Naive thymus-derived CD8-positive, alpha-beta T cell (primary cell): ENCODE measurements at regions of chr17 and their contacts with region 1.

Region 1: DNA sequence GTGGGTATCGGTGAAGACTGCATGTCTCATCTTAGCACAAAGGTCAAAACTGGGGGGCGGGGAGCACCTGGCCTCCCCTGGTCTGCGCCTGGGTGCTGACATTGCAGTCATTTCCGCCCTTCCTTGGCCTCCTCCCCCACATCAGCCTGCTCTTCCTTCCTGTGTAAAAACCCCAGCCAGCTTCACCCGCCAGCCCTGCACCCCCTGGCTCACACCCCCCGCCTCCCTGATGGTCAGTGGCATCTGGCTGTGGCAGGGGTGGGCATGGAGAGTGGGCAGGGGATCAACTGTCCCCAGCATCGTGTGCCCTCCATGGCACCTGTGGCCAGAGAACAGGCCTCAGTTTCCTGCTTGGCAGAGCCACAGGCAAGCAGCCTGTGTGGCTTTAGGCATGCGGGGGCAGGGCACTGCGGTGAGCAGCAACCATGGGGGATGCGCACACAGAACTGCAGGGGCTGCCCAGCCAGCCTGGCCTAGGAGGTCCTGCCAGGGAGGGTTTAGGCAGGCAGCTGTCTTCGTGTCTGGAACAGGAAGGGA is 26.5 kb upstream of the LASP1NB start:
- DNase-seq: peak; percentile 54 to 90 (median 76)
- ATAC-seq: peak; percentile 81 to 90
- H3K4me3 Mint-ChIP-seq: peak overlapping the region; percentile 74 to 93 (median 84)
- H3K27ac Mint-ChIP-seq: peak overlapping the region; percentile 92 to 100 (median 97)
- H3K4me1 Mint-ChIP-seq: peaks cover 22 to 84% (median 70%) of the 10 kb centered on the region in 4 donors
- H3K27me3 Mint-ChIP-seq: no peaks in the 10 kb centered on the region

Region 2: DNA sequence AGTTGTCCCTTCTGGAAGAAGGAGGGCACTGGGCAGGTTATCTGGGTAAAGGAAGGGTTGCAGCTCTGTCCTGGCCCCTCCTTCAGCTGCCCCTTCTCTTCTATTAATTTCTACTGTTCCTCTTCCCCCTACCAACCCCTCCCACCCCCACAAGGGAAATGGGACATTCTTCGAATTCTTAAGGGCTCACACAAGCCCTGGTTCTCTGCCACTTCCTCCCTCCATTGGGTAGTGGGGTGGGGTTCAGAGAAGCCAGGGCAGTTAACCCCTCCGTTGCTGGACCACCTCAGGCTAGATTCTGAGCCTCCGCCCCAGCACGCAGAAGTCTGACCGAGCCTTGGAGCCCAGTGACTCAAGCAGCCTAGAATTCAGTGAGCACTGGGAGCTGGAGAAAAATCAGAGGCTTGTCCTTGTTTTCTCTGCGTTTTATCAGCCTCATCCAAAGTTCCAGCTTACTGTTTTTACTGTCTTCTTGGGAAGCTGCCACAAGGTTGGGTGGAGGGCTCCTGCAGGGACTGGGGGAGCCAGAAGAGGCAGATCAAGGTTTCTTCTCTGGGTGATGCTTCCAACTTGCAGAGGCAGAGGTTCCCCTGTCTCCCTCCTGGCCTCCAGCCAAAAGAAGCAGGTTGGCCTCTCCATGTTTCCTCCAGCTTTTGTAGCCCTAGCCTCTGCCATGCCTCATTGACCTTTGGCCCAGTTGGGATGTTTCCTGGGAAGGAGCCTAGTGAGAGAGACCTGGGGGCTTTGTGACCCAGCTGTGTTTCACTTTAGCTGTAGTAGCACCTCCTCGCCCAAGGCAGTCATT is 18.8 kb before region 1 on chr17:
- POLR2A ChIA-PET with region 1: interaction called, 159 read pairs
- DNase-seq: peak in 3 of 10 donors; percentile 54 to 70 (median 54)
- ATAC-seq: peak; percentile 24 to 30
- H3K4me3 Mint-ChIP-seq: peak overlapping the region; percentile 56 to 89 (median 79)
- H3K27ac Mint-ChIP-seq: peak overlapping the region; percentile 72 to 96 (median 92)
- H3K4me1 Mint-ChIP-seq: peaks cover 59 to 95% (median 90%) of the 10 kb centered on the region in 4 donors
- H3K27me3 Mint-ChIP-seq: no peaks in the 10 kb centered on the region

Region 3: GRCh38 chr17:38967290-38967738 is 68.4 kb after region 1 on chr17 and contains the start of gene FBXO47:
- POLR2A ChIA-PET with region 1: interaction called, 10 read pairs
- DNase-seq: peak; percentile 53 to 94 (median 82)
- ATAC-seq: peak; percentile 98 to 99
- H3K4me3 Mint-ChIP-seq: peak within 1 kb of the TSS; percentile 73 to 89 (median 84)
- H3K27ac Mint-ChIP-seq: peak within 1 kb of the TSS; percentile 72 to 96 (median 90)
- H3K4me1 Mint-ChIP-seq: peaks cover 7 to 20% (median 12%) of the 10 kb centered on the region in 4 donors
- H3K27me3 Mint-ChIP-seq: no peaks in the 10 kb centered on the region
- polyA plus RNA-seq, gene FBXO47: not detected